OCI-LY7 (cell line): ENCODE measurements at regions of chr14 and their contacts with region 1.

Region 1: GRCh38 chr14:102096214-102097114 is 9.6 kb upstream of the HSP90AA1 start:
- DNase-seq: peak; percentile 74
- H3K4me3 ChIP-seq: no peak overlapping the region
- H3K27ac ChIP-seq: no peak overlapping the region
- H3K4me1 ChIP-seq: peaks cover 7% of the 10 kb centered on the region
- CTCF ChIP-seq: peak; percentile 98

Region 2: GRCh38 chr14:101707068-101707842 is 389.2 kb before region 1 on chr14:
- CTCF ChIA-PET with region 1: no interaction called
- POLR2A ChIA-PET with region 1: no interaction called
- intact Hi-C with region 1: loop called (anchors 1 kb)
- DNase-seq: peak; percentile 83
- H3K4me3 ChIP-seq: no peak overlapping the region
- H3K27ac ChIP-seq: no peak overlapping the region
- H3K4me1 ChIP-seq: peaks cover 6% of the 10 kb centered on the region
- CTCF ChIP-seq: peak; percentile 94

Region 3: DNA sequence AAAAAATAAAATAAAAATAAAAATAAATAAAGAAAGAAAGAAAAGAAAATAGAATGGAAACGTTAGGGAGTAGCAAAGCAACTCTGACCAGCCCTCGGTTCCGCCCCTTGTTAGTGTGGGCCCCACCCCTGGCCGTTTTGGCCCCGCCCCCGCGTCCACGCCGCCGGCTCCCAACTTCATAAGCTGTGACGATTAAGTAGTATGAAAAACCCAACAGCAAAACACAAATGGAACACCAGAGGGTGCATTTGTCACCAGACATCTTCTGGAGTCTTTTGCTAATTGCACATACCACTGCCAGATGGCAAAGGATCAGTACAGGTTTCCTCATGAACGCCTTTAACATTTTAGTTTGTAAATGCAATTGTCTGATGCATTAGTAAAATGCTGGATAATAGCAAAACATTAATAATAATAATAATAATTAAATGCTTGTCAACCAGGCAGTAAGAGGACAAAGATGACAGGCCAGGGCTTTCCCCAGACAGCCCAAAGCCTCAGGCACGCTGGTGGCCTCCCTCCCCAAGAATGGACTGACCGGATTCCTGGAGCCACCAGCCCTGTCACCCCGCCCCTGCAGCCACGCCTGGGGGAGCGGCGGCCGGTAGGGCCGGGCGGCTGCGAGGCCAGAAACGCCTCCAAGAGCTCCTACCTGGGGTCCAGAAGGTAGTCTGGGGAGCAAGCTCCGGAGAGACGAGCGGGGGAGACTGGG is 33.2 kb before region 1 on chr14:
- CTCF ChIA-PET with region 1: no interaction called
- POLR2A ChIA-PET with region 1: no interaction called
- intact Hi-C with region 1: loop called (anchors 1 kb)
- DNase-seq: peak; percentile 83
- H3K4me3 ChIP-seq: no peak overlapping the region
- H3K27ac ChIP-seq: no peak overlapping the region
- H3K4me1 ChIP-seq: no peaks in the 10 kb centered on the region
- CTCF ChIP-seq: peak; percentile 76

Region 4: DNA sequence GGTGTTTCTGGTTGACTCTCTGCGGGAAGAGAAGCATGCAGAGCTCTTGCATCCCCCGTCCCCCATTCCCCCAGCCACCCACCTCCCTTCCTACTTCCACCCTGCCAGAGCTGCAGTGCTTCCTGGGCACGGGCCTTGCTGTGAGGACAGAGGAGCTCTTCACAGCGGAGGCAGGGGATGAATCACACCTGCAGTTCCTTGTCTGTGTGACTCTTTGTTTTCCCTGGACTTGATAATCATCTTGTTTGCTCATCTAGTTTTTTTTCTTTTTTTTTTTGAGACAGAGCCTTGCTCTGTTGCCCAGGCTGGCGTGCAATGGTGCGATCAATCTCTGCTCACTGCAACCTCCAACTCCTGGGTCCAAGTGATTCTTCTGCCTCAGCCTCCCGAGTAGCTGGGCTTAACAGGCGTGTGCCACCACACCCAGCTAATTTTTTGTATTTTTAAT is 385.4 kb after region 1 on chr14:
- CTCF ChIA-PET with region 1: no interaction called
- POLR2A ChIA-PET with region 1: no interaction called
- intact Hi-C with region 1: no loop called
- DNase-seq: no peak
- H3K4me3 ChIP-seq: no peak overlapping the region
- H3K27ac ChIP-seq: no peak overlapping the region
- H3K4me1 ChIP-seq: no peaks in the 10 kb centered on the region
- CTCF ChIP-seq: no peak